ENCODE measurements at regions of chr12 and their contacts with region 1.

Region 1: GRCh38 chr12:14995583-14996425 is 23.0 kb downstream of the PDE6H start:
- DNase-seq: no peak
- ATAC-seq: peak; percentile 56

Region 2: DNA sequence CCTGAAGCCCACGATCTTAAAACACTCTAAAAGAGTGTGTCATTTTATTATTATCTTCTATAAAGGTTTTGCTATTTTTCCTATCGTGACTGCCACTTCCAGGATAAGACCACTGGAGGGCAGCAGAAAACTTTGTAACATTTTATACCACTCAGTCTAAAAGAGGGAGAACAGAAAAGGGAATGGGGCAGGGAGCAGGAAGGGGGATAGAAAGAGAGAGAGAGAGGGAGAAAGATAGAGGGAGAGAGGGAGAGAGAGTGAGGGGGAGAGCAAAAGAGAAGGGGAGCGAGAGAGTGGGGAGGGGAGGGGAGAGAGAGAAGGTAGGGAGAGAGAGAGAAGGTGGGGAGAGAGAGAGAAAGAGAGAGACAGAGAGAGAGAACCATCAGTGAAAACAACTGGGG is 150.5 kb before region 1 on chr12:
- intact Hi-C with region 1: loop called (anchors 2 to 10 kb)
- DNase-seq: peak in 1 of 2 donors; percentile 35
- ATAC-seq: peak; percentile 72

Measured in left colon (tissue), 2 donors.